Activated CD8-positive, alpha-beta memory T cell treated with anti-CD3 and anti-CD28 coated beads, Interleukin-2, amount 10 ng/mL, durations not matched to agents 7 days and 5 days (primary cell): ENCODE measurements at regions of chr15 and their contacts with region 1.

Region 1: DNA sequence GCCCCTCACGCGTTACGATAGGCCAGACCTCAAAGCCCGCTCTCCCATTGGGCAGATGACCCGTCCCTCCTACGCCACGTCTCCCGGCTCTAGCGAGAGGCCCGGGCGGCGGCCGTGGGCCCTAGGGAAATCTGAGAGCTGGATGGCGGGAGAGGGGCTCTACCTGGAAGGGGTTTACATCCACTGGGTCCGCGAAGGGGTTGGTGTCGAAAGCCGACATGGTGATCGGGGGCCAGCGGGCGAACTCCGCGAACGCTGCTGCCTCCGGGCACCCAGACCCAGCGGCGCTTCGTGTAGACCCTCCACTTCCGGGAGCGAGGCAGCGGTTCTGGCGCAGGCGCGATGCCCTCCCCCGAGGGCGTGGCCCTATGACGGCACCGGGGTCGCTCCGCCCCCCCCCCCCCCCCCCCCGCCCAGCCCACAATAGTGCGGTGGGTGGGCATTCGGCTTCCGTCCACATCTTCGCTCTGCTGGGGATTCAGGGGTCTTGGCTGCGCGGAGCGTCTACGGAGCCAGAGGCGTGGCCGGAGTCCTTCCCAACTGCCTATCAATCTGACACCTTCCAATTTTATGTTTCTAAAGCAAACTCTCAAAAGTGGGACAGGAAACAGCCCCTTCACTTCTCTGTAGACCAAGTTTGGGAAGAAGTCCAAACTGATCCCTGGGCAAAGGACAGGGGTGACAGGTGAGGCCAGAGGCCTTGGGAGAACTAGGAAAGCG is at the start of gene SCAMP2:
- DNase-seq: peak; percentile 97
- ATAC-seq: peak; percentile 93
- H3K4me3 Mint-ChIP-seq: peak within 1 kb of the TSS; percentile 94
- H3K27ac Mint-ChIP-seq: peak within 1 kb of the TSS; percentile 94
- H3K4me1 Mint-ChIP-seq: peaks cover 46% of the 10 kb centered on the region
- H3K27me3 Mint-ChIP-seq: no peaks in the 10 kb centered on the region
- total RNA-seq, gene SCAMP2: 108 to 115 TPM

Region 2: DNA sequence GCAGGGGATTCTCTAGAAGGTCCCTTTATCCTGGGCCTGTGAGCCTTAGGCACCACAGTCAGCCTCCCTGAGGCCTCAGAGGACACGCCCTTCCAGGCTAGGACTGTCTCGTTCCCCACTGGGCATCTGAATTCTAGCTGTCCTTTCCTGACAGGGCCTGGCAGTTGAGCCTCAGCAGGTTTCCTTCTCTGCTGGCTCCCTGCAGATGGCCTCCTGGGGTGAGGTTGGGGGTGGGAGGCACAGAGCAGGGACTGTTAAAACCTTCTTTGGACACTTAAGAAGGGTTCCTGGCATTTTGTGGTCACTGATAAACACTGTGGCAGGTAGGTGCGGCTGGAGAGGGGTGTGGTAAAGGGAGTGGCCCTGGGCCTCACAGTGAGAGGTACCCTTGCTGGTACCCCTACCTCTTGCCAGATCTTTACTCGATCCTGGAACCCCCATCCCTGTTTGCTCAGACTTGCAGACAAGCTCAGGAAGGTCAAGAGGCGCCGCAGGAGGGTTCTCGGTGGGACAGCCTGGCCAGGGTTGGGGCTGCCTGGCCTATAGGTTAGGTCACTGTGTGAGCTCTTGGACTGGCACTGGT is 249.1 kb before region 1 on chr15:
- CTCF ChIA-PET with region 1: no interaction called
- DNase-seq: no peak
- ATAC-seq: no peak
- H3K4me3 Mint-ChIP-seq: no peak overlapping the region
- H3K27ac Mint-ChIP-seq: no peak overlapping the region
- H3K4me1 Mint-ChIP-seq: peaks cover 36% of the 10 kb centered on the region
- H3K27me3 Mint-ChIP-seq: no peaks in the 10 kb centered on the region

Region 3: DNA sequence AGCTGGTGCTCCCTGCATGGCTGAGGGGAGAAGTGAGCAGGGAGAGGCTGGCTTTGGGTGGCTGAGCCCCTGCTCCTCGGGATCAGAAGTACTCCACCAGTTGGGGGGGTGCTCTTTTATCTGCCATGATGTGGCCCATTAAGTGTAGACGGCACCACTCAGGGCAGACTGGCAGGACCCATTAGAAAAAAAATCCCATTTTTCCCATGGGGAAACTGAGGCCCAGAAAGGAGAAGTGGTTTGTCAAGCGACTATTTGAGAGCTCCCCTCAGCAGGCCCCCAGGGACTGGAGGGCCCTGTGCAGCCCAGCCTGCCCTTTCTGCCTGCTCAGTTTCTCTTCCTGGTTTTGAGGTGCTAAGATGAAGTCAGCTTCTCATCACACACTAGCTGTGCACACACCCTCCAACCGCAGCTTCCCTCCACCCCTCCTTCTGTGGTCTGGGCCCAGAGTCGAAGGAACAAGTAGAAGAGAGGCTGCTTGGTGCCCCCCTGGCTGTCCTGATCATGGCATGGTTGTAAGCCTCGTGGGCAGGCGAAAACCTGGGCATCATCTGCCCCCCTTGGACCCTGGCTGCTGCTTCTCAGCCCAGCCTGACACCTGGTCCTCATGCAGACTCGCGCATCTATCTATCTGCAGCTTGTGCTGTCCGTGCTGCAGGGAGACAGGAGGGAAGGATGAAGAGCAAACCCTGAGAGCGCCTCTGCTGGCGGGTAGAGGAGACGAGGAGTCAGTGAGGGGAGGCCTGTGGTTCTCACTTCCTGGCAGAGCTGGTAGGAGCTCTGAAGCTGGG is 85.8 kb before region 1 on chr15:
- CTCF ChIA-PET with region 1: interaction called, 18 read pairs
- DNase-seq: peak; percentile 99
- ATAC-seq: peak; percentile 67
- H3K4me3 Mint-ChIP-seq: peak overlapping the region; percentile 79
- H3K27ac Mint-ChIP-seq: peak overlapping the region; percentile 98
- H3K4me1 Mint-ChIP-seq: peaks cover 67% of the 10 kb centered on the region
- H3K27me3 Mint-ChIP-seq: no peaks in the 10 kb centered on the region

Region 4: DNA sequence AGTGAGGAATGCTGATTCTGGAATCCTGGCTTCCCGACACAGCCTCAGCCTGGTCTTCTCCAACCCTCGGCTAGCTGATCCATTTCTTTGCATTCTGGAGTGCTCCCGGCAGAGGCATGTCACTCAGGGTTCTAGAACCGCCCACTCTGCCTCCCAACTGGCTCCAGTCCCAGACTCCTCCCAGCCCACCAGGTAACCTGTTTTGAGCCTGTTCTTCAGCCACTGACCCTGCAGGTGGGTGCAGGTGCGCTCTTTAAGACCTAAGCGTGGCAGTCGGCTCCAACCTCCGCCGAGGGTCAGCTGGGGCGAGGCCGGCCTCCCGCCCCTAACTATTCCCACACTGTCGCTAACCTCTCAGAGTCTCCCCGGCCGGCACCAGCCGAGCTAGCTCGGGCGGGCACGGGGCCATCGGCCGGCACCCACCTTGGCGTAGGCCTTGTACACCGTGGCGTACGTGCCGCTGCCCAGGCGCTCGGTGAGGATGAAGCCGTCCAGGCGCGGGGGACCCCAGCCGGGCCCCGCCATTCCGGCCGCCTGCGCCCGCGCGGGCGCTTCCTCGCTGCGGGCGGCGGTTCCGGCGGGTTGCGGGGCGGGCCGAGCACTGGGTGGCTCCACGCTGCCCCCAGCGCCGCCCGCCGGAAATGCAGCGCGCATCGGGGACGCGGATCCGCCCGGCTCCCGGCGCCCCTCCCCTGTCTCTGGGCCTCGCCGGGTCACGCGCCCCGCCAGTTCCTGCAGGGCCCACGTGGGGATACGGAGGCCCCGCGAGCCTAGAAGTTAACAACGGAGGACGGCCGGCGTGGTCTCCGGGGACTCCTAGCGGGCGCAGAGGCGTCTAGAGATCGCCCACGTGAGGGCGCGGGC is 30.4 kb before region 1 on chr15 and contains the start of gene ULK3:
- CTCF ChIA-PET with region 1: interaction called, 10 read pairs
- DNase-seq: peak; percentile 95
- ATAC-seq: peak; percentile 87
- H3K4me3 Mint-ChIP-seq: peak within 1 kb of the TSS; percentile 87
- H3K27ac Mint-ChIP-seq: peak within 1 kb of the TSS; percentile 93
- H3K4me1 Mint-ChIP-seq: peaks cover 47% of the 10 kb centered on the region
- H3K27me3 Mint-ChIP-seq: no peaks in the 10 kb centered on the region
- total RNA-seq, gene ULK3: 48.5 to 58.6 TPM

Region 5: GRCh38 chr15:74857082-74857655 is 16.0 kb before region 1 on chr15:
- CTCF ChIA-PET with region 1: interaction called, 19 read pairs
- DNase-seq: no peak
- ATAC-seq: no peak
- H3K4me3 Mint-ChIP-seq: no peak overlapping the region
- H3K27ac Mint-ChIP-seq: peak overlapping the region; percentile 91
- H3K4me1 Mint-ChIP-seq: peaks cover 43% of the 10 kb centered on the region
- H3K27me3 Mint-ChIP-seq: no peaks in the 10 kb centered on the region

Region 6: DNA sequence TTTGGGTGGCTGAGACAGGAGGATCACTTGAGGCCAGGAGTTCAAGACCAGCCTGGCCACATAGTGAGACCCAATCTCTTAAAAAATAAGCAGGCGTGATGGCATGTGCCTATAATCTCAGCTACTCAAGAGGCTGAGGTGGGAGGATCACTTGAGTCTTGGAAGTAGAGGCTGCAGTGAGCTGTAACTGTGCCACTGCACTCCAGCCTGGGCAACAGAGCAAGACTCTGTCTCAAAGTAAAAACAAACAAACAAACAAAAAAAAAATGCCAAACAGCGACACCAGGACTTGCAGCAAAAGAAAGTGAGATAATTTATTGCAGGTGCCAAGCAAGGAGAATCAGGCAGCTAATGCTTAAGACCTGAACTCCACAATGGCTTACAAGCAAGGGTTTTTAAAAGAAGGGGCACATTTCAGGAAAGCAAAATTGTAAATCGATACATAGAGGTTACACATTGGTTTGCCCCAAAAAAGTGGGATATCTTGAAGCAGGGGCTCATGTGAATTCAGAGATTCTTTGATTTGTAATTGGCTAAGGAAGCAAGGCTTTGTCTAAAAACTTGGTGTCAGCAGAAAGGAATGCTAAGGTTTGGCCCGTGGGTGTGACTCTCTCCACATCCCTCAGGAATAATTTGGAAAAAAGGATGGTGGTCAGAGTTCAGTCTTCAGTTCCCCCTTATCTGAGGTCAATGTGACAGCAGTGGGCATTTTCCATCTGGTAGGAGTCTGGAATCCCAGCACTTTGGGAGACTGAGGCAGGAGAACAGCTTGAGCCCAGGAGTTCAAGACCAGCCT is 11.4 kb after region 1 on chr15:
- CTCF ChIA-PET with region 1: interaction called, 14 read pairs
- DNase-seq: no peak
- ATAC-seq: no peak
- H3K4me3 Mint-ChIP-seq: no peak overlapping the region
- H3K27ac Mint-ChIP-seq: no peak overlapping the region
- H3K4me1 Mint-ChIP-seq: peaks cover 22% of the 10 kb centered on the region
- H3K27me3 Mint-ChIP-seq: no peaks in the 10 kb centered on the region

Region 7: DNA sequence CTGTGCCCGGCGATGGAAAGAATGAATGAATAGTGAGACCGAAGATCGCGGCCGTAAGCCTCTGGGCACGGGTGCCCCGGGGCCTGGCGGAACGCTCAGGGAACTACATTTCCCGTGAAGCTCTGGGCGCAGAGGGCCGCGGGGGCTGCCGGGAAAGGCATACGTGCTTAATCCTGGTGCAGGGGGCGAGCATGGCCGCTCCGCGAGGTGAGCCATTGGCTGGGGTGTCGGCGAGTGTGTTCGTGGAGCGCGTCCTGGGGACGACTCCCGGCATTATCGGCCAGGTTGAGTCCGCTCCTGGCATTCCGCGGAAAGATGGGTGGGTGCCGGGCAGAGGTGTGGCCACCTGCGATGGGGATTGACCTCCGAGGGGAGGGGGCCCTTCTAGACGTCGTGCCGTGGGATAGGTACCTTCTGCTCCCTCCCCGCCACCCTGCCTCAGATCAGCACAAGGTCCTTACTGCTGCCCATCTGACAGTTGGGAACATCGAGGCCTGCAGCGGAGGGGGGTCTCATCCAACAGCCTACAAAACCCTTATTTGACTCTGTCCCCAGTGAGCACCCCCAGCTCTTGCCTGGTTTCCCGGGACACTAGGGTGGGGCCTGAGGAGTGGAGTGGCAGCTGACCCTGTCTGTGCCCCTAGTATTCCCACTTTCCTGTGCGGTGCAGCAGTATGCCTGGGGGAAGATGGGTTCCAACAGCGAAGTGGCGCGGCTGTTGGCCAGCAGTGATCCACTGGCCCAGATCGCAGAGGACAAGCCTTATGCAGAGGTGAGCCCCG is 16.9 kb after region 1 on chr15 and contains the start of gene MPI:
- CTCF ChIA-PET with region 1: interaction called, 10 read pairs
- DNase-seq: peak; percentile 93
- ATAC-seq: peak; percentile 96
- H3K4me3 Mint-ChIP-seq: peak within 1 kb of the TSS; percentile 93
- H3K27ac Mint-ChIP-seq: peak within 1 kb of the TSS; percentile 93
- H3K4me1 Mint-ChIP-seq: peaks cover 47% of the 10 kb centered on the region
- H3K27me3 Mint-ChIP-seq: no peaks in the 10 kb centered on the region
- total RNA-seq, gene MPI: 52.8 to 59.0 TPM

Region 8: GRCh38 chr15:74995241-74995778 is 122.1 kb after region 1 on chr15 and contains the start of gene SCAMP5:
- CTCF ChIA-PET with region 1: no interaction called
- DNase-seq: peak; percentile 96
- ATAC-seq: peak; percentile 96
- H3K4me3 Mint-ChIP-seq: peak within 1 kb of the TSS; percentile 57
- H3K27ac Mint-ChIP-seq: no peak within 1 kb of the TSS
- H3K4me1 Mint-ChIP-seq: peaks cover 18% of the 10 kb centered on the region
- H3K27me3 Mint-ChIP-seq: peaks cover 57% of the 10 kb centered on the region
- total RNA-seq, gene SCAMP5: 0.61 to 0.94 TPM